Posterior vena cava (tissue), 2 donors: ENCODE measurements at regions of chr20 and their contacts with region 1.

Region 1: GRCh38 chr20:17611540-17612286 is 41.8 kb downstream of the DSTN start:
- DNase-seq: peak; percentile 81

Region 2: DNA sequence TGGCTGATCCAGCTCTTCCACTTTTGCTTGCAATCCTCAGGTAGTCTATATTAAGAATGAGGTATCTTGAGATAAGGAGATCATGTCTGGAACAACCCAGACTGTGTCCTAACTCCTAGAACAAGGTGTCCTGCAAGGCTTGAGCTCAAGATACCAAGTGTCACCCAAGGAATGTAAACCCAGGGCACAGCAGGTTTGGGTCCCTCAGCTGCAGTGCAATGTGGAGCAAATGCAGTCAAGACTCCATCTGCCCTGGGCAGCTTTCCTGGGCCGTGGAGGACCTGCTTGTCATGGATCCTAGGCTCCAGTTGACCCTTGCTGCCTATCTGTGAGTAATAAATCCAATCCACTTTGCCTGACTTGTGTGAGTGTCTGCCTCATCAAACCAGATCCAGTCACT is 697.4 kb before region 1 on chr20:
- intact Hi-C with region 1: no loop called
- DNase-seq: no peak

Region 3: DNA sequence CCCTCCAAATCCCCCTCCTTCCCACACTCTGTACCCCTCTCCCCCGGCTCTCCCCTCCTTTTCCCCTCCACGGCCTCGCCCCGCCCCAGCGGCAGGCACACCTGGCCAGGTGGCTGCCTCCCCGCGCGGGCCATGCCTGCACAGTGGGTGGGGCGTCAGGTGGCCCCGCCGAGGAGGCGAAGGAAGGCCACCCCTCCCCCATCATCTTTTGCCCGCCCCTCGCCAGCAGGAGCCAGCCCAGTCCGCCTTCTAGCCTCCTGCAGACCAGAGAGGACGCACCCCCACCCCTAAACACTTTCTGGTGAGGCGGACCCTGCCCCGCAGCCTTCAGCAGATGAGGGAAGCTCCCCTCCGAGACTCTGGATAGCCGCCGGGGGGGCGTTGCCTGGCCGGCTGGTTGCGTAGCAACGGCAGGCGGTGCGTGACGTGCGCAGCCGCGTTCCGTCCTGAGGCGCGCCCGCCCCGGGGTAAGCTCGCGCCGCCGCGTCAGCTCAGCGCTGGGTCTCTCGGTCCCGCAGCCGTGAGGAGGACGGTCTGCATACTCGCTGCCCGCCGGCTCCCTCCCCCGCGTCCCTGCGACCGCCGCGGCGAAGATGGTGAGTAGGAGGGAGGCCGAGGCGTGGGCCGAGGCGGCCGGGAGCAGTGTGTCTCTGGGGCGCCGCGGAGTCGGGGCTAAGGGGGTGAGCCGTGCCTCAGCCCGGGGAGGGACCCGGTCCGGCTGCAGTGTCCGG is 41.9 kb before region 1 on chr20 and contains the start of gene DSTN:
- intact Hi-C with region 1: loop called in 1 of 2 experiments (anchors 5 kb)
- DNase-seq: peak; percentile 98
- total RNA-seq, gene DSTN: 1,245 to 1,338 TPM